ENCODE measurements at regions of chr3 and their contacts with region 1.

Region 1: DNA sequence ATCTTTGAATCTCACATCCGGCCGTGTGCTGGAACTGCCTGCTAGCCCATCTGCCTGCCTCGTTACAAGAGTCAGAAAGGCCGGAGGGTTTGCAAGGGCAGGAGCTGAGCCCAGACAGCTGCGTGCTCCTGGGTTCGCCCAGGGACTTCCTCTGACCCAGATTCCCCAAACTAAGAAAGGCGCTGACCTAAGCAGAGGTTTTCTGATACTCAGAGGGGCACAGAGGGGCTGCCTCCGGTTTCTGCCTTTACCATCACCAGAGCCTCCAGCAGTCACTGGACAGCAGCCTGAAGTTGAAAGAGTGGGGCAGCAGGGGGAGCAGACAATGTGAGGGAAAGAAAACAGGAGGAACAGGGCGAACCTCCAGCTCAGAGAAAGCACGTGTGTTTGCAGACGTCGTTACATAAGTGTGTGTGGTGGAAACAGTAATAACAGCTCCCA is 33.4 kb upstream of the RAD18 start:
- DNase-seq: no peak
- H3K4me3 ChIP-seq: no peak overlapping the region
- H3K27ac ChIP-seq: no peak overlapping the region
- H3K4me1 ChIP-seq: peaks cover 0 to 5% (median 4%) of the 10 kb centered on the region in 4 experiments; a peak in 3 of 7 replicates
- H3K27me3 ChIP-seq: no peaks in the 10 kb centered on the region
- CTCF ChIP-seq: peak; percentile 44 to 57 (median 54)
- EP300 ChIP-seq: no peak
- POLR2A ChIP-seq: no peak
- RAD21 ChIP-seq: peak; percentile 35 to 61

Region 2: GRCh38 chr3:9013782-9014563 is 17.3 kb after region 1 on chr3:
- CTCF ChIA-PET with region 1: interaction called, 24 read pairs
- POLR2A ChIA-PET with region 1: no interaction called
- DNase-seq: no peak
- H3K4me3 ChIP-seq: no peak overlapping the region
- H3K27ac ChIP-seq: no peak overlapping the region
- H3K4me1 ChIP-seq: no peaks in the 10 kb centered on the region
- H3K27me3 ChIP-seq: no peaks in the 10 kb centered on the region
- CTCF ChIP-seq: peak in 1 of 3 experiments; percentile 5; a peak in 1 of 4 replicates
- EP300 ChIP-seq: no peak
- POLR2A ChIP-seq: no peak
- RAD21 ChIP-seq: peak; percentile 28 to 41

Region 3: GRCh38 chr3:9047452-9048346 is 51.0 kb after region 1 on chr3:
- CTCF ChIA-PET with region 1: interaction called, 11 read pairs
- POLR2A ChIA-PET with region 1: no interaction called
- DNase-seq: no peak
- H3K4me3 ChIP-seq: no peak overlapping the region
- H3K27ac ChIP-seq: no peak overlapping the region
- H3K4me1 ChIP-seq: peaks cover 0 to 4% (median 0%) of the 10 kb centered on the region in 4 experiments; a peak in 2 of 7 replicates
- H3K27me3 ChIP-seq: no peaks in the 10 kb centered on the region
- CTCF ChIP-seq: no peak
- EP300 ChIP-seq: no peak
- POLR2A ChIP-seq: no peak
- RAD21 ChIP-seq: no peak

Region 4: DNA sequence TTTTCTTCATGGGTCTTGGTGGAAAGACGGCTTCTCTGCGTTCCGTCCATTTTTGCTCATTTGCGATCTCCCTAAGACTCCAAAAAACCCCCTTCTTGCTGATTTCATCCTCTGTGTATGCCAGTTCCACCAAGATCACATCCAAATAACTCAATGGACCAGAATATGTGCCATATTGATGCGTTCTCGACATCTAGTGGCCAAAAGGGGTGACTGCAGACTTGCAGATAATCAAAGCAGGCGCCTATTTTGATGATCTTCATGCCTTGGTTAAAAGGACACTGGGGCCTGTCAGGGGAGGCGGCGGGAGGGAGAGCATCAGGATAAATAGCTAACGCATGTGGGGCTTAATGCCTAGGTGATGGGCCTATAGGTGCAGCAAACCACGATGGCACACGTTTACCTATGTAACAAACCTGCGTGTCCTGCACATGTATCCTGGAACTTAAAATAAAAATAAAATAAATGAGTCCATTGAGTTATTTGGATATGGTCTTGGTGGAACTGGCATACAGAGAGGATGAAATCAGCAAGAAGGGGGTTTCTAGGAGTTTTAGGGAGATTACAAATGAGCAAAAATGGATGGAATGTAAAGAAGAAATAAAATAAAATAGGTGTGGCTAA is 70.8 kb after region 1 on chr3:
- CTCF ChIA-PET with region 1: interaction called, 80 read pairs
- POLR2A ChIA-PET with region 1: no interaction called
- DNase-seq: peak; percentile 31 to 65
- H3K4me3 ChIP-seq: no peak overlapping the region
- H3K27ac ChIP-seq: no peak overlapping the region
- H3K4me1 ChIP-seq: no peaks in the 10 kb centered on the region
- H3K27me3 ChIP-seq: no peaks in the 10 kb centered on the region
- CTCF ChIP-seq: peak; percentile 32 to 96 (median 94)
- EP300 ChIP-seq: no peak
- POLR2A ChIP-seq: no peak
- RAD21 ChIP-seq: peak; percentile 97

Measured in H1 (cell line).